Activated CD4-positive, alpha-beta T cell treated with anti-CD3 and anti-CD28 coated beads, Interleukin-2, amount 10 ng/mL, durations not matched to agents 24 days and 14 days (primary cell): ENCODE measurements at regions of chr14 and their contacts with region 1.

Region 1: DNA sequence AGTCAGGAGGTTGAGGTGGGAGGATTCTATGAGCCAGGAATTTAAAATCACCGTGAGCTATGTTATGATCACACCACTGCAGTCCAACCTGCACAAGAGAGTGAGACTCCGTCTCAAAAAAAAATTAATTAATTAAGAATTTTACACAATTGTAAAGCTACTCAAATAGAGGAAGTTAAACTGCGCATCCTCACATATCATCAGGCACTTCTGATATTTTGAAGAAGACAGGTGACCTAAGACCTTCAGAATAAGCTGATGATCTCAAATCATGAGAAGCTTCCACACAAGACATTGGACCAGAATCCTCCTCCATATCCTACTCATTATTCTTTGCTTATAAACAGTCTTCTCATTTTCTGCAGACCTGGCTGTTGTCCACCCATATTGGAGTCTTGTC is 800.9 kb downstream of the TMEM121 start:
- DNase-seq: peak; percentile 44
- H3K4me3 Mint-ChIP-seq: no peak overlapping the region
- H3K27ac Mint-ChIP-seq: no peak overlapping the region
- H3K4me1 Mint-ChIP-seq: no peaks in the 10 kb centered on the region
- H3K27me3 Mint-ChIP-seq: peaks cover 31% of the 10 kb centered on the region

Region 2: GRCh38 chr14:105107781-105108515 is 1219.3 kb before region 1 on chr14:
- intact Hi-C with region 1: no loop called
- DNase-seq: no peak
- H3K4me3 Mint-ChIP-seq: no peak overlapping the region
- H3K27ac Mint-ChIP-seq: no peak overlapping the region
- H3K4me1 Mint-ChIP-seq: peaks cover 3% of the 10 kb centered on the region
- H3K27me3 Mint-ChIP-seq: peaks cover 38% of the 10 kb centered on the region

Region 3: GRCh38 chr14:106347890-106348755 is 20.9 kb after region 1 on chr14:
- intact Hi-C with region 1: loop called (anchors 1 kb)
- DNase-seq: peak; percentile 58
- H3K4me3 Mint-ChIP-seq: no peak overlapping the region
- H3K27ac Mint-ChIP-seq: no peak overlapping the region
- H3K4me1 Mint-ChIP-seq: peaks cover 2% of the 10 kb centered on the region
- H3K27me3 Mint-ChIP-seq: peaks cover 47% of the 10 kb centered on the region